HEK293 (cell line): ENCODE measurements at regions of chr7 and their contacts with region 1.

Region 1: GRCh38 chr7:16420649-16421332 is 547 bp downstream of the CRPPA start:
- H3K4me3 ChIP-seq: peak overlapping the region; percentile 55
- H3K27ac ChIP-seq: peak overlapping the region; percentile 86
- H3K4me1 ChIP-seq: no peaks in the 10 kb centered on the region
- CTCF ChIP-seq: no peak; the same call in none of the 2 replicates

Region 2: GRCh38 chr7:16338065-16338464 is 82.7 kb before region 1 on chr7:
- CTCF ChIA-PET with region 1: interaction called, 10 read pairs
- POLR2A ChIA-PET with region 1: no interaction called
- H3K4me3 ChIP-seq: no peak overlapping the region
- H3K27ac ChIP-seq: no peak overlapping the region
- H3K4me1 ChIP-seq: no peaks in the 10 kb centered on the region
- CTCF ChIP-seq: no peak

Region 3: GRCh38 chr7:16465469-16466361 is 44.9 kb after region 1 on chr7 and contains the start of gene SOSTDC1:
- CTCF ChIA-PET with region 1: no interaction called
- POLR2A ChIA-PET with region 1: interaction called, 15 read pairs
- H3K4me3 ChIP-seq: peak within 1 kb of the TSS; percentile 35
- H3K27ac ChIP-seq: peak within 1 kb of the TSS; percentile 32; the same call in 1 of the 2 replicates
- H3K4me1 ChIP-seq: no peaks in the 10 kb centered on the region
- CTCF ChIP-seq: no peak

Region 4: DNA sequence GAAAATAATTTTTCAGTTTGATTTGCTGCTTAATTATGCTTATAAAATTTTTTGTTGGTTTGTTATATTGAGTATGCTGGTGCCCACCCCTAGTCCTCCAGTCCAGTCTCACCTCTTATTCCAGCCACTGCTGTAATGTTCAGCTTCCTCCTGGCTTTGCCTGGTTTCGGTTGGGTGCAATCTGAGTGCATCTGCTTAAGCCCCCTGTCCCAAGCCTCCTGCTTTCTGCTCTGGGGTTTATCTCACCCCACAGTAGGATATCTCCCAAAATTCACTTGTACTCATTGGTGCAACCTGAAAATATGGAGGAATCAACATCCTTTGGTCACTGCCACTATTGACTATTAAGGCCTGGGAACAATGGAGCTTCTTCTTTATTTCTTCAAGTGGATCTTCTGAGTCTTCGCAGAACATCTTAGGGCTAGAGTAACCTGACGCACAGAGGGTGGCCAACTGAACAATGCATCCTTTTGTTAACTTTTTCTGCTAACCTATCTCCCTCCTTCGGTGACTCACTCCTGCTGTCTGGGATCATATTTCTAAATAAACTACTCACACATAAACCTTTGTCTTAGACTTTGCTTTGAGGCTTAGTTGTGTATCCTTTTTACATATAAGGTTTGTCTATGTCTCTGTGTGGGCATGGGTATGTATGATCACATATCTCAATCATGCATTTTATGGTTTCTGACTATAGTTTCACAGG is 63.8 kb after region 1 on chr7:
- CTCF ChIA-PET with region 1: no interaction called
- POLR2A ChIA-PET with region 1: no interaction called
- H3K4me3 ChIP-seq: no peak overlapping the region
- H3K27ac ChIP-seq: no peak overlapping the region; the same call in 1 of the 2 replicates
- H3K4me1 ChIP-seq: peaks cover 9% of the 10 kb centered on the region
- CTCF ChIP-seq: no peak

Region 5: DNA sequence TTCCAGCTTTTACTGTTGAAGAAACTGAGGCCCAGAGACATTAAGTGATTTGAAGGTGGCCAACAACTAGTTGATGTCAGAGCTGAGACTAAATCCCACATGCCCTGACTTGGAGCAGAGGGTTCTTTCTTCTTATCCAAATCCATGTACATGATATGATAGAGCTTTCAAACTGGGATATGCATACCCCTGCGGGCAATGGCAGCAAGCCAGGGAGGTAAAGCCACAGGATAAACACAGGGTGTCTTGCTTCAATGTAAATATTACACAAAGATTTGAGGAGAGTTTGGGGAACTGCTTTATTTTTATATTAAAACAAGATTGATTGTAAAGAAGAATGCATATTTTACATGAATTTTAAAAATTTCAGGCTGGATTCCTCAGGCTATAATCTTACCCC is 103.5 kb after region 1 on chr7:
- CTCF ChIA-PET with region 1: no interaction called
- POLR2A ChIA-PET with region 1: no interaction called
- H3K4me3 ChIP-seq: no peak overlapping the region
- H3K27ac ChIP-seq: no peak overlapping the region
- H3K4me1 ChIP-seq: peaks cover 5% of the 10 kb centered on the region
- CTCF ChIP-seq: no peak